Naive thymus-derived CD4-positive, alpha-beta T cell (primary cell): ENCODE measurements at regions of chr1 and their contacts with region 1.

Region 1: GRCh38 chr1:160951443-160952128 is 3.0 kb downstream of the ITLN2 start:
- DNase-seq: peak; percentile 53 to 80 (median 71)
- ATAC-seq: peak; percentile 92
- H3K4me3 ChIP-seq: no peak overlapping the region
- H3K4me3 Mint-ChIP-seq: no peak overlapping the region
- H3K27ac ChIP-seq: no peak overlapping the region
- H3K27ac Mint-ChIP-seq: peak overlapping the region in 2 of 9 donors; percentile 26 to 48
- H3K4me1 ChIP-seq: peaks cover 0 to 16% of the 10 kb centered on the region in 2 donors
- H3K4me1 Mint-ChIP-seq: peaks cover 6 to 21% (median 11%) of the 10 kb centered on the region in 7 donors
- H3K27me3 ChIP-seq: no peaks in the 10 kb centered on the region
- H3K27me3 Mint-ChIP-seq: no peaks in the 10 kb centered on the region

Region 2: GRCh38 chr1:160437432-160438316 is 513.9 kb before region 1 on chr1:
- CTCF ChIA-PET with region 1: no interaction called
- POLR2A ChIA-PET with region 1: no interaction called
- intact Hi-C with region 1: loop called in 1 of 2 experiments (anchors 10 kb)
- DNase-seq: peak in 6 of 9 donors; percentile 30 to 57 (median 41)
- ATAC-seq: peak; percentile 85
- H3K4me3 ChIP-seq: peak overlapping the region; percentile 59
- H3K4me3 Mint-ChIP-seq: peak overlapping the region; percentile 77 to 94 (median 82)
- H3K27ac ChIP-seq: peak overlapping the region; percentile 80
- H3K27ac Mint-ChIP-seq: peak overlapping the region; percentile 91 to 99 (median 96)
- H3K4me1 ChIP-seq: peaks cover 11 to 33% of the 10 kb centered on the region in 2 donors
- H3K4me1 Mint-ChIP-seq: peaks cover 22 to 53% (median 46%) of the 10 kb centered on the region in 7 donors
- H3K27me3 ChIP-seq: no peaks in the 10 kb centered on the region
- H3K27me3 Mint-ChIP-seq: no peaks in the 10 kb centered on the region

Region 3: DNA sequence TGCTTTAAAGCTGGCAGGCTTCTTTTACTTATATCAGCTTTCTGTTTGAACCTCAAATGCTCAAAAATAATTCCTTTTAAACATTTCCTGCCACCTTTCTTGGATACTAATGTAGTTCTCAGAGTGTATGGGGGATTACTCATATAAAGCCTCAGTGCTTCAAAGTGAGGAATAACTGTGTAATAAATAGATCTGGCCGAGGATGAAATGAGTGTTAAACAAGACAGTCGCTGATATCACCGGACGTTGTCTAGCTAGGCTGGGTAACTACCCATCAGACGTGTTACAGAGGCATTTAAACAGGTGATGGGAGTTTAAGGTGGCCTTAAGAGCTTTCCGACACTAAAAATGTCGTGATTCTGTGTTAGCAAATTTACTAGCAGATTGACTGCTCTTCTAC is 498.1 kb before region 1 on chr1:
- CTCF ChIA-PET with region 1: no interaction called
- POLR2A ChIA-PET with region 1: no interaction called
- intact Hi-C with region 1: no loop called
- DNase-seq: no peak
- ATAC-seq: peak; percentile 20
- H3K4me3 ChIP-seq: peak overlapping the region; percentile 20
- H3K4me3 Mint-ChIP-seq: peak overlapping the region in 5 of 10 donors; percentile 8 to 47 (median 19)
- H3K27ac ChIP-seq: no peak overlapping the region
- H3K27ac Mint-ChIP-seq: peak overlapping the region in 7 of 9 donors; percentile 4 to 89 (median 36)
- H3K4me1 ChIP-seq: peaks cover 12 to 24% of the 10 kb centered on the region in 2 donors
- H3K4me1 Mint-ChIP-seq: peaks cover 20 to 72% (median 60%) of the 10 kb centered on the region in 7 donors
- H3K27me3 ChIP-seq: no peaks in the 10 kb centered on the region
- H3K27me3 Mint-ChIP-seq: no peaks in the 10 kb centered on the region

Region 4: DNA sequence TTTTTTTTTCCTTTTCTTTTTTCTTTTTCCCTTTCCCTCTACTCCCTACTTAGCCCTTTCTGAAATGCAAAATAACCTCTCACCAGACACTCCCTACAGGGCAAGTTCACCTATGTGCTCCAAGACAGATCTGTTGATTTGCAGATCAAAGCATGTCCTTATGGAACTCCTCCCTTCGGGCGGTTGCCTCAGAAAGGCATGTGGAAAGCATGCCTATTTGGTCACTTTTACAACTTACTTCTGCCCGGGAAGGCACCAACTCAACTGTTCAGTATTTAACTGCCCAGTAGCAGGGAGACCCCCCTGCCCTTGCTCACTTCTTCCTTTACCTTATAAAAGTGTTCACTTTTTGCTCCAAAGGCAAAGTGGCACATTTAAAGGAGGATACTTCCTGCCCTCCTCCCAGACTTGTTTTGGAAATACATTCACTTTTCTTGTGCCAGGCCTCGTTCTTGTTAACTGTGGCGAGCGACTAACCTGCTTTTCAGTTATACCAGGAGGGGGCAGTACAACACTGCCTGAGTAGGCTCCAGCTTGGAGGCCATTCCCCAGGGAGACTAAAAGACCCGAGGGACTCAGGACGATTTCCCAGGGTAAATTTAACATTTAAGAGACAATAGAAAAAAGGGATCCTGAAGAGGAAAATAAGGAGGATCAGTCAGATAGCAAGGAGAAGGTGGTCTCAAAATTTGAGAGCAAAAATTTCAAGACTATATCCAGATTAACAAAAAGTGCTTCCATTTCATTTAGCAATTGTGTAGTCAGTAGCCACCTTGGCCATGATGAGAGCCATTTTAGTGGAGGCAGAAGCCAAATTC is 224.9 kb before region 1 on chr1:
- CTCF ChIA-PET with region 1: interaction called, 69 read pairs
- POLR2A ChIA-PET with region 1: interaction called, 4 read pairs
- intact Hi-C with region 1: loop called (anchors 1 kb)
- DNase-seq: peak in 8 of 9 donors; percentile 57 to 80 (median 73)
- ATAC-seq: peak; percentile 97
- H3K4me3 ChIP-seq: no peak overlapping the region
- H3K4me3 Mint-ChIP-seq: no peak overlapping the region
- H3K27ac ChIP-seq: no peak overlapping the region
- H3K27ac Mint-ChIP-seq: no peak overlapping the region
- H3K4me1 ChIP-seq: peaks cover 15 to 21% of the 10 kb centered on the region in 2 donors
- H3K4me1 Mint-ChIP-seq: peaks cover 12 to 29% (median 16%) of the 10 kb centered on the region in 7 donors
- H3K27me3 ChIP-seq: no peaks in the 10 kb centered on the region
- H3K27me3 Mint-ChIP-seq: no peaks in the 10 kb centered on the region

Region 5: DNA sequence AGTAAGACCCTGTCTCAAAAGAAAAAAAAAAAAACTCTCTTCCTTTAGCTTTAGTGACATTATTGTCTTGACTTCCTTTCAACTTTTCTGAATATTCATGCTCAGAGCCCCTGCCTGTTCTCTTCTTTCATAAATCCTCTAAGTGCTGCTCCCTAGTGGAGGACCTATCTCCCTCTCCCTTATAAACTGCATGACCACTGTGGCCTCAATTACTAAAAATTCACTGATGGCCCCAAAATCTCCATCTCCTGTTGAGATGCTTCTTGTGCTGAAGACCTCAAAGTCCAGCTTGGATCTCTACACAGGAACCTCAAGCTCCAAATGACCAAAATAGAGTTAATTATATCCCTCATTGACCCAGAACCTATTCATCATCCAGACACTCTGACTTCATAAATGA is 74.4 kb before region 1 on chr1:
- CTCF ChIA-PET with region 1: no interaction called
- POLR2A ChIA-PET with region 1: no interaction called
- intact Hi-C with region 1: loop called in 1 of 2 experiments (anchors 10 kb)
- DNase-seq: peak in 7 of 9 donors; percentile 32 to 72 (median 50)
- ATAC-seq: peak; percentile 83
- H3K4me3 ChIP-seq: no peak overlapping the region
- H3K4me3 Mint-ChIP-seq: peak overlapping the region in 2 of 10 donors; percentile 1 to 4
- H3K27ac ChIP-seq: no peak overlapping the region
- H3K27ac Mint-ChIP-seq: peak overlapping the region in 4 of 9 donors; percentile 5 to 15 (median 10)
- H3K4me1 ChIP-seq: peaks cover 8 to 10% of the 10 kb centered on the region in 2 donors
- H3K4me1 Mint-ChIP-seq: peaks cover 15 to 28% (median 23%) of the 10 kb centered on the region in 7 donors
- H3K27me3 ChIP-seq: no peaks in the 10 kb centered on the region
- H3K27me3 Mint-ChIP-seq: peaks cover 0 to 11% (median 0%) of the 10 kb centered on the region in 5 donors

Region 6: DNA sequence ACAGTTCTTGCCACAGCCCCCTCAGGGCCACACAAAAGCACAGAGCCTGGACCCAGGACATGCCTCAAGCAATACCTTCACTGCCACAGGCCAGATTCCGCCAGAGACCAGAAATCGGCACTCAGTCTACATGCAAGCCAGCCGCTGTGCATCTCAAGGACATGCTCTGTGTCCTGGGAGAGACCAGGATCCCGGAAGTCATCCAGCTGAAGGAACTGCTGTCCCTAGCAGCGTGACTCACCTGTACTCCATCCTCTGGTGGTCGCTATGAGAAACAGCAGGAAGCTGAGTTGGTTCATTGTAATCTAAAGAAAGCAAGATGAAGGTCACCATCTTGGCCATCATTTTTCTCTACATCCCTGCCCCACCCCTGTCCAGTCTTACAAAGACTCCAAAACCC is 67.0 kb before region 1 on chr1:
- CTCF ChIA-PET with region 1: interaction called, 3 read pairs
- POLR2A ChIA-PET with region 1: no interaction called
- intact Hi-C with region 1: loop called (anchors 2 to 10 kb)
- DNase-seq: peak in 2 of 9 donors; percentile 32
- ATAC-seq: no peak
- H3K4me3 ChIP-seq: no peak overlapping the region
- H3K4me3 Mint-ChIP-seq: no peak overlapping the region
- H3K27ac ChIP-seq: no peak overlapping the region
- H3K27ac Mint-ChIP-seq: no peak overlapping the region
- H3K4me1 ChIP-seq: no peaks in the 10 kb centered on the region
- H3K4me1 Mint-ChIP-seq: peaks cover 0 to 10% (median 0%) of the 10 kb centered on the region in 7 donors
- H3K27me3 ChIP-seq: no peaks in the 10 kb centered on the region
- H3K27me3 Mint-ChIP-seq: peaks cover 0 to 6% (median 0%) of the 10 kb centered on the region in 5 donors

Region 7: DNA sequence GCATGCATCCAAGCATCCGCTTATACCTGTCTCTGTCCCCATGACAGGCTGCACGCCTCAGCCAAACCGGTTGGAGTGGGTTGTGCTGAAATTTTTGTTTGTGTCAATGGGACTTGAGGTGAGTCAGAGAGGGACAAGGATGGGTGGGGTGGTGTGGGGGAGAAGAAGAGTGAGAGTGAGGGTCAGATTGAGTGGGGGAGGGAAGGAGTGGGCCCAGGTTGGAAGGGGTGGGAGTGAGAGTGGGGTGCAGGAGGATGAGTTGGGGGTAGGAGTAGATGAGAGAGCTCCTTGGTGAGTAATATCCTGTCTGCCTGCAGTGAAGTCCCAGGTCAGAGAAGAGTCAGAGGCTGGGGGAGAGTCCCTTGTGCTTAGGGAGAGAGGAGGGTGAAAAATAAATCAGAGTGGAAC is 141.0 kb after region 1 on chr1:
- CTCF ChIA-PET with region 1: no interaction called
- POLR2A ChIA-PET with region 1: no interaction called
- intact Hi-C with region 1: no loop called
- DNase-seq: peak in 1 of 9 donors; percentile 65
- ATAC-seq: no peak
- H3K4me3 ChIP-seq: no peak overlapping the region
- H3K4me3 Mint-ChIP-seq: peak overlapping the region in 1 of 10 donors; percentile 1
- H3K27ac ChIP-seq: no peak overlapping the region
- H3K27ac Mint-ChIP-seq: peak overlapping the region in 2 of 9 donors; percentile 25 to 47
- H3K4me1 ChIP-seq: peaks cover 5 to 7% of the 10 kb centered on the region in 2 donors
- H3K4me1 Mint-ChIP-seq: peaks cover 18 to 58% (median 26%) of the 10 kb centered on the region in 7 donors
- H3K27me3 ChIP-seq: no peaks in the 10 kb centered on the region
- H3K27me3 Mint-ChIP-seq: peaks cover 0 to 11% (median 0%) of the 10 kb centered on the region in 5 donors